PC-9 (cell line): ENCODE measurements at regions of chr1 and their contacts with region 1.

Region 1: GRCh38 chr1:35287807-35288640 is 19.5 kb downstream of the ZMYM4 start:
- DNase-seq: peak; percentile 23 to 64
- H3K4me3 ChIP-seq: no peak overlapping the region
- H3K27ac ChIP-seq: peak overlapping the region; percentile 43
- H3K4me1 ChIP-seq: peaks cover 18% of the 10 kb centered on the region
- H3K27me3 ChIP-seq: no peaks in the 10 kb centered on the region
- CTCF ChIP-seq: no peak

Region 2: DNA sequence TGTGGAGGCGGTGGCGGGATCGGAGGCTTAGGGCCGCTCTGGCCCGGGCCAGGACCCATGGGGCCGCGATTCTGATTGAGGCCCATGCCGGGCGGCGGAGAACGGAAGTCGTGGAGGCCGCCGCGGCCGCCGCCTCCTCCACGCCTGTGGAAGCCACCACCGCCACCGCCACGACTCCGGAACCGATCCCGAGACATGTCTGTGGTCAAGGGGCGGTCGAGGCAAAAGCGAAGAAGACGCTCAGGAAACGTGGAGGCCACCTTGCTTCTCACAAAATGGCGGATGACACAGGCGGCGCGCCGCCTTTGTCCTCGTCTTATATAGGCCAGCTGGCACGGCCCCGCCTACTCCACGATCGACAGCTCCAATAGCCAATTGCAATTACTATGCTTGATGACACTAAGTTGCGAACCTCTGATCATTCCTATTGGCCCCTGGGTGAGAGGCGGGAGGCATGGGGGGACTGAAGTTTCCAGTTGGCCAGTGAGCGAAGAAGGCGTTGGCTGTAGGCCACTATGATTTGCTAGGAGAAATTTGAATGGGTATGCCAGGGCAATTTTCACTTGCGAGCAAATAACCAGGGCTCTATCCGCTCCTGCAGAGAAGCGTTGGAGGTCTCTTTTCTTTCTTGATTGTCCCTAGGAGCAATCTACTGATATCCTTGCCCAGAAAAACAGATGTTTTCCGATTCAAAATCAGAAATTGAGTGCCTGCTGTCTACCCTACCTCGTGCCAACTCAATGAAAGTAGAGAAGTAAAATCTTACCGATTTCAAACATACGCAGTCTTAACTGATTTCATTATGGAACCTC is 95.0 kb before region 1 on chr1 and contains the start of gene SFPQ:
- CTCF ChIA-PET with region 1: no interaction called
- POLR2A ChIA-PET with region 1: no interaction called
- intact Hi-C with region 1: loop called (anchors 5 kb)
- DNase-seq: peak; percentile 96 to 99
- H3K4me3 ChIP-seq: peak within 1 kb of the TSS; percentile 98
- H3K27ac ChIP-seq: peak within 1 kb of the TSS; percentile 72
- H3K4me1 ChIP-seq: peaks cover 21% of the 10 kb centered on the region
- H3K27me3 ChIP-seq: no peaks in the 10 kb centered on the region
- CTCF ChIP-seq: no peak
- total RNA-seq, gene SFPQ: 191 and 299 TPM in 2 replicates

Region 3: GRCh38 chr1:35215346-35215745 is 72.7 kb before region 1 on chr1:
- CTCF ChIA-PET with region 1: no interaction called
- POLR2A ChIA-PET with region 1: interaction called, 10 read pairs
- intact Hi-C with region 1: no loop called
- DNase-seq: no peak
- H3K4me3 ChIP-seq: no peak overlapping the region
- H3K27ac ChIP-seq: no peak overlapping the region
- H3K4me1 ChIP-seq: no peaks in the 10 kb centered on the region
- H3K27me3 ChIP-seq: no peaks in the 10 kb centered on the region
- CTCF ChIP-seq: no peak

Region 4: GRCh38 chr1:35268282-35269200 is 19.5 kb before region 1 on chr1 and contains the start of gene ZMYM4:
- CTCF ChIA-PET with region 1: interaction called, 3 read pairs
- POLR2A ChIA-PET with region 1: no interaction called
- intact Hi-C with region 1: loop called (anchors 2 kb)
- DNase-seq: peak; percentile 92 to 95
- H3K4me3 ChIP-seq: peak within 1 kb of the TSS; percentile 71
- H3K27ac ChIP-seq: peak within 1 kb of the TSS; percentile 71
- H3K4me1 ChIP-seq: peaks cover 35% of the 10 kb centered on the region
- H3K27me3 ChIP-seq: no peaks in the 10 kb centered on the region
- CTCF ChIP-seq: no peak
- total RNA-seq, gene ZMYM4: 55.6 and 84.4 TPM in 2 replicates

Region 5: DNA sequence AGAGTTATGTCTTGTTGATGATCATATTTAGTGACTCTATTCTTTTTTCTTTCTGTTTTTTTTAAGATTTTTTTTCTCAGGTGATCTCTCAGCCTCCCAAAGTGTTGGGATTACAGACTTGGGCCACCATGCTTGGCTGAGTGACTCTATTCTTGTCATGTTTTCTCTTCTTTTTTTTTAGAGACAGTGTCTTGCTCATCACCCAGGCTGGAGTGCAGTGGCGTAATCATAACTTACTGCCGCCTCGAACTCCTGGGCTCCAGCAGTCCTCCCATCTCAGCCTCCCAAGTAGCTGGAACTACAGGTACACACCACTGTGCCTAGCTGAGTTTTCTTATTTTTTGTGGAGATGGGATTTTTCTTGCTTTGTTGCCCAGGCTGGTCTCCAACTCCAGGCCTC is 17.4 kb after region 1 on chr1:
- CTCF ChIA-PET with region 1: no interaction called
- POLR2A ChIA-PET with region 1: no interaction called
- intact Hi-C with region 1: loop called (anchors 2 kb)
- DNase-seq: no peak
- H3K4me3 ChIP-seq: no peak overlapping the region
- H3K27ac ChIP-seq: no peak overlapping the region
- H3K4me1 ChIP-seq: no peaks in the 10 kb centered on the region
- H3K27me3 ChIP-seq: no peaks in the 10 kb centered on the region
- CTCF ChIP-seq: no peak